Lower leg skin (tissue), 4 donors: ENCODE measurements at regions of chr9 and their contacts with region 1.

Region 1: DNA sequence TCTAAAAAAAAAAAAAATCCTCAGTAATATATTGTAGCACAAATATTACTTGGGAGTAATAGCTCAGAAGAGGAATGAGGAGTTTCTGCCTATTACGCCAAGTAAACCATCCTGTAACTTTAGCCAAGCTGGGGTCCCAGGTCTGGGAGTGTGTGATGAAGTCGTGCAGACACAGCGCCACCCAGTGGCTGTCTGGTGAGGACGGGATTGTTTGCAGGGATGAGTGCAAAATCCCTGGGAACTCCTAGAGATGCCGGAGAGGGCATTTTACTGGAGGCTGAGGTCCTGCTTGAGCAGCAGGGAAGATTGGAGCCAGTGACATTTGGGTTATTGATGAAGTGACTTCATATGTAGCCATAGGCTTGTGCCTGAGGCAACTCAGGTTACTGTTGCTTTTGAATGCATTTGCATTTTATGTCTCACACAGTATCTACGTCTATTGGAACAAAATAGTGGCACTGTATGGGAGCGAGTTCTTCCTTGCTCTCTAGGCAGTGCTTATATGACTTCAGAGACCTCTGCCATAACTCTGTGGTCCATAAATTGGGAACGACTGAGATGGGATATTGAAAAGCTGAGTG is 72.8 kb downstream of the PSAT1 start:
- DNase-seq: peak; percentile 27 to 89
- H3K4me3 ChIP-seq: no peak overlapping the region
- CTCF ChIP-seq: no peak
- POLR2A ChIP-seq: no peak

Region 2: GRCh38 chr9:78235756-78236538 is 133.8 kb before region 1 on chr9 and contains the start of gene CEP78:
- intact Hi-C with region 1: loop called (anchors 10 kb)
- DNase-seq: peak; percentile 86 to 97
- H3K4me3 ChIP-seq: peak within 1 kb of the TSS; percentile 76
- CTCF ChIP-seq: no peak
- POLR2A ChIP-seq: no peak
- total RNA-seq, gene CEP78: 5.9 to 10.7 (median 7.7) TPM

Region 3: GRCh38 chr9:78261403-78262001 is 108.2 kb before region 1 on chr9:
- intact Hi-C with region 1: loop called (anchors 5 kb)
- DNase-seq: no peak
- H3K4me3 ChIP-seq: no peak overlapping the region
- CTCF ChIP-seq: no peak
- POLR2A ChIP-seq: no peak

Region 4: GRCh38 chr9:78781681-78782080 is 412.0 kb after region 1 on chr9:
- intact Hi-C with region 1: no loop called
- DNase-seq: no peak
- H3K4me3 ChIP-seq: no peak overlapping the region
- CTCF ChIP-seq: no peak
- POLR2A ChIP-seq: no peak